ENCODE measurements at regions of chr14 and their contacts with region 1.

Region 1: DNA sequence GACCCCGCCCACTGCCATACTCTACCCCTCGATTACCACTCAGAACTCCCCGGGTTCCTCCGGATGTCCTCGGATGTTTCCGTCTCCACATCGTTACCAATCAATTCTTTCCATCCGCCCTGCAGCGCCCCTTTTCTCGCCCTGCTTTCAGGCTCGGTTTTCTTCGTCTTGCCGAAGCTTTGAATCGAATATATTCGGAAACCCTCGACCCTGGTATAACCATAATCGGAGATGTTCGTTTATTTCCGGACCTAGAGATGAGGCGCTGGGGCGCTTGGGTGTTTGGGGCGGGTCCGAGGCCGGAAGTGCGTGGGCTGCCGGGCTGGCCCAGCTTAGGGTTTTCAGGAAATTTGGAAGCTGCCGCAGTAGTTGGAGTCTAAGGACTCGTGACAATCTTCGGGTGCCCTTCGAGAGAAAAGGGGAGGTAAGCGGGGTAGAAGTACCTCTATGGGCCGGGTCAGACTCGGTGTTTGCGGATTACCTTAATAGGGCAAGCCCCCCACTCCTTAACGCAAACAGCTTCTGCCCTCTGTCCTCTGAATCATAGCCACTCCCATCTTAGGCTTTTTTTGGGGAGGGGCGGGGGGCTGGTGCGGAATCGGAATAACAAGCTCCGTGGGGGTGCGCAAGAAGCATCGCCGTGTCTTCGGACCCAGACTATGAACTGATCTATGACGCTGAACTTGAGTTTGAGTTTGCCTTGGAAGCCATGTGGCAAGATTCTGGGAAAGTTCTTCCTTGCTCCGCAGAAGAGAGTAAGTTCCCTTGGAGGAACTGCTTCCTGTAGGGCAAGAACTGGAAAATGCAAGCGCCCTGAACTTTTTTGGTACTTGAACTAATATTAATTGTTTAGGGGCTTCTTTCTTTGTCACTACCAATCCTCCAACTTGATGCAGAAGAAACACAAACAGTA is at the start of gene C14orf119:
- DNase-seq: peak; percentile 100
- ATAC-seq: peak; percentile 92
- H3K4me3 ChIP-seq: peak within 1 kb of the TSS; percentile 71 to 96 (median 95)
- H3K27ac ChIP-seq: peak within 1 kb of the TSS; percentile 89
- H3K4me1 ChIP-seq: peaks cover 37% of the 10 kb centered on the region
- H3K27me3 ChIP-seq: no peaks in the 10 kb centered on the region; a peak in 1 of 5 replicates
- CTCF ChIP-seq: peak; percentile 16; the same call in 1 of the 2 replicates
- EP300 ChIP-seq: no peak; a peak in 2 of 4 replicates
- POLR2A ChIP-seq: peak in 1 of 2 experiments; percentile 55; a peak in 2 of 4 replicates
- RAD21 ChIP-seq: peak; percentile 42; the same call in 1 of the 2 replicates
- total RNA-seq, gene C14orf119: 206 and 299 TPM in 2 replicates

Region 2: GRCh38 chr14:22872033-22872832 is 223.2 kb before region 1 on chr14:
- CTCF ChIA-PET with region 1: no interaction called
- POLR2A ChIA-PET with region 1: interaction called, 19 read pairs
- in situ Hi-C with region 1: no loop called
- intact Hi-C with region 1: no loop called
- DNase-seq: peak; percentile 84
- ATAC-seq: peak; percentile 62
- H3K4me3 ChIP-seq: peak overlapping the region; percentile 66 to 93 (median 82)
- H3K27ac ChIP-seq: peak overlapping the region; percentile 85
- H3K4me1 ChIP-seq: peaks cover 35% of the 10 kb centered on the region
- H3K27me3 ChIP-seq: no peaks in the 10 kb centered on the region; a peak in 1 of 5 replicates
- CTCF ChIP-seq: peak; percentile 99
- EP300 ChIP-seq: peak in 1 of 2 experiments; percentile 54; a peak in 2 of 4 replicates
- POLR2A ChIP-seq: no peak
- RAD21 ChIP-seq: peak; percentile 68

Region 3: DNA sequence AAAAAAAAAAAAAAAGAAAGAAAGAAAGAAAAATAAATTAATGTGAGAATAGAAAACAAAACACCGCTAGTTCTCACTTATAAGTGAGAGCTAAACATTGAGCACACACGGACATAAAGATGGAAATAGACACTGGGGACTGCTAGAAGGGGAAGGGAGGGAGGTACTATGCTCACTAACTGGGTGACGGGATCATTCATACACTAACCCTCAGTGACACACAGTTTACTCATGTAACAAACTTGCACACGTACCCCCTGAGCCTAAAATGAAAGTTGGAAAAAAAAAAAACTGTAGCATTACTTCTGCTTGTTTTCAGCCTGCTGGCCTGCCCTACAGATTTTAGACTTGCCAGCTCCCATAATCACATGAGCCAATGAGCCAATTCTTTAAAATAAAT is 155.8 kb before region 1 on chr14:
- CTCF ChIA-PET with region 1: no interaction called
- POLR2A ChIA-PET with region 1: no interaction called
- in situ Hi-C with region 1: no loop called
- intact Hi-C with region 1: no loop called
- DNase-seq: no peak
- ATAC-seq: no peak
- H3K4me3 ChIP-seq: no peak overlapping the region
- H3K27ac ChIP-seq: no peak overlapping the region
- H3K4me1 ChIP-seq: no peaks in the 10 kb centered on the region
- H3K27me3 ChIP-seq: no peaks in the 10 kb centered on the region
- CTCF ChIP-seq: no peak
- EP300 ChIP-seq: no peak
- POLR2A ChIP-seq: no peak
- RAD21 ChIP-seq: no peak

Region 4: GRCh38 chr14:22973217-22974032 is 122.0 kb before region 1 on chr14:
- CTCF ChIA-PET with region 1: no interaction called
- POLR2A ChIA-PET with region 1: interaction called, 55 read pairs
- in situ Hi-C with region 1: no loop called
- intact Hi-C with region 1: no loop called
- DNase-seq: peak; percentile 82
- ATAC-seq: no peak
- H3K4me3 ChIP-seq: no peak overlapping the region
- H3K27ac ChIP-seq: peak overlapping the region; percentile 97
- H3K4me1 ChIP-seq: peaks cover 65% of the 10 kb centered on the region
- H3K27me3 ChIP-seq: no peaks in the 10 kb centered on the region
- CTCF ChIP-seq: no peak
- EP300 ChIP-seq: no peak
- POLR2A ChIP-seq: peak in 1 of 2 experiments; percentile 73; a peak in 2 of 4 replicates
- RAD21 ChIP-seq: peak; percentile 97

Region 5: GRCh38 chr14:23034483-23035302 is 60.8 kb before region 1 on chr14 and contains the start of gene PSMB5:
- CTCF ChIA-PET with region 1: no interaction called
- POLR2A ChIA-PET with region 1: interaction called, 18 read pairs
- in situ Hi-C with region 1: no loop called
- intact Hi-C with region 1: loop called (anchors 2 kb)
- DNase-seq: peak; percentile 100
- ATAC-seq: peak; percentile 96
- H3K4me3 ChIP-seq: peak within 1 kb of the TSS; percentile 78 to 86 (median 80)
- H3K27ac ChIP-seq: peak within 1 kb of the TSS; percentile 90
- H3K4me1 ChIP-seq: peaks cover 38% of the 10 kb centered on the region
- H3K27me3 ChIP-seq: no peaks in the 10 kb centered on the region; a peak in 1 of 5 replicates
- CTCF ChIP-seq: peak; percentile 14
- EP300 ChIP-seq: peak; percentile 3 to 52; a peak in 2 of 4 replicates
- POLR2A ChIP-seq: peak in 1 of 2 experiments; percentile 98; a peak in 2 of 4 replicates
- RAD21 ChIP-seq: peak; percentile 49; the same call in 1 of the 2 replicates
- total RNA-seq, gene PSMB5: 871 and 1,316 TPM in 2 replicates

Region 6: DNA sequence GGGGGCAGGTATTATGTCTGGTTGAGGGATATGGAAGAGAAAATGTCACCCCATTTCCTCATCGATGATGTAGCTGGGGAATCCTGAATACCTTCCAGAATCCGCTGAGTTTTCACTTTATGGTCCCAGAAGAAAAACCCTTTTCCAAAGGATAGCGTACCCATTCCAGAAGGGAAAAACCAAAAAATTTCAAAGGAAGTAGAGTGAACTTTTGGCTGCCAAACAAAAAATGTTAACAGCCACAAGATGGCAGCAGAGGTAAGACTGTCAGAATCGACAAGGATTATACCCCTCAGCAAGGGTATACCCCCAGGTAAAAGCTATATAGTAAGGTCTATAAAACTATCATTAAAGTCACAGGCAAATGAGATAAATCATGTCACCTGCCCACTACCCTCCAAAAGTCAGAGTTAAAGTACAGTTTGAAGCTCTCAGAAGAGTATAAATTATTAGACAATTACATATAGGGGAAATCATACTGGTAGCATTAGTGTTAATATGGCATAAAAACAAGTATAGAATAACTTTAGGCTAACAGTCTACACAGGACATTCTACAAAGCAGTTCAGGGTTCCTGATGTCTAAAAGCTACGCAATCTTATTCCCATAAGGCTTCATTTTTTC is 18.6 kb before region 1 on chr14:
- CTCF ChIA-PET with region 1: interaction called, 7 read pairs
- POLR2A ChIA-PET with region 1: interaction called, 146 read pairs
- in situ Hi-C with region 1: no loop called
- intact Hi-C with region 1: no loop called
- DNase-seq: peak; percentile 68
- ATAC-seq: peak; percentile 57
- H3K4me3 ChIP-seq: no peak overlapping the region
- H3K27ac ChIP-seq: no peak overlapping the region
- H3K4me1 ChIP-seq: peaks cover 9% of the 10 kb centered on the region
- H3K27me3 ChIP-seq: no peaks in the 10 kb centered on the region
- CTCF ChIP-seq: peak; percentile 70
- EP300 ChIP-seq: no peak
- POLR2A ChIP-seq: no peak
- RAD21 ChIP-seq: no peak

Region 7: DNA sequence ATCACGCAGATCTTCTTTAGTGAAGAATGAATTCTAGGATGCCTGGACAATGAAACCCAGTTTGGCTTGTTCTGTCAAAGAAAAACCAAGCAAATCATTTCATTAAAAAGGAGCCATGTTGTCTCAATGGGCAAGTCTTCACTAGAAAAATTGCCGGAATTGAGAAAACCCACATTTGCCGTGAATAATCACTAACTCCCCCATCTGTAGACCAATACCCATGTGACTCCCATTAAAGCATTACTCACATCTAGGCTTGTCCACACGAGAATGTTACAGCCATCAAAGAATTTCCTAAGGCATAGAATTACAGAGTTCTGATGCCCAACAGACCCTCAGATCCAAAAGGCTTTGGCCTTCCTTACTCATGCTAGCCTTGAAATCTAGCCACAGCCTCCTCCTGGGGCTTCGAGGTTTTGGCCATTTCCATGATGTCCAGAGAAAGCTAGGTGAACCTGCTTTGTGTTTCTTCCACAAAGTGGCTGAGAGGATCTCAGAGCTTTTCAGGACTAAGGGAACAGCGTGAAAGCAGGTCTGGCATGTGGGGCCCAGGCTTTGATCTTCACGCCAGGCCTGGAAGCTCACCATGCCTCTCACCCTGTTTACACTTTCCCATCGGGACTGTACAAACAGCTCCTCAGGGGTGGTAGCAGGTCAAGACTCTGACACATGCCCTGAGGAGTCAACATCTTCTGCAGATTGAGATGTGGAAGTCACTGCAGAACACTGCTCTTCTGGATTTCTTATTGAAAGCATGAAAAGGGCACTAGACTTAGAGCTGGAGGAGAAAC is 76.0 kb after region 1 on chr14:
- CTCF ChIA-PET with region 1: no interaction called
- POLR2A ChIA-PET with region 1: no interaction called
- in situ Hi-C with region 1: no loop called
- intact Hi-C with region 1: no loop called
- DNase-seq: no peak
- ATAC-seq: peak; percentile 63
- H3K4me3 ChIP-seq: no peak overlapping the region
- H3K27ac ChIP-seq: no peak overlapping the region
- H3K4me1 ChIP-seq: peaks cover 15% of the 10 kb centered on the region
- H3K27me3 ChIP-seq: peaks cover 5 to 38% of the 10 kb centered on the region in 2 experiments; a peak in 3 of 5 replicates
- CTCF ChIP-seq: no peak
- EP300 ChIP-seq: no peak
- POLR2A ChIP-seq: no peak
- RAD21 ChIP-seq: no peak

Region 8: DNA sequence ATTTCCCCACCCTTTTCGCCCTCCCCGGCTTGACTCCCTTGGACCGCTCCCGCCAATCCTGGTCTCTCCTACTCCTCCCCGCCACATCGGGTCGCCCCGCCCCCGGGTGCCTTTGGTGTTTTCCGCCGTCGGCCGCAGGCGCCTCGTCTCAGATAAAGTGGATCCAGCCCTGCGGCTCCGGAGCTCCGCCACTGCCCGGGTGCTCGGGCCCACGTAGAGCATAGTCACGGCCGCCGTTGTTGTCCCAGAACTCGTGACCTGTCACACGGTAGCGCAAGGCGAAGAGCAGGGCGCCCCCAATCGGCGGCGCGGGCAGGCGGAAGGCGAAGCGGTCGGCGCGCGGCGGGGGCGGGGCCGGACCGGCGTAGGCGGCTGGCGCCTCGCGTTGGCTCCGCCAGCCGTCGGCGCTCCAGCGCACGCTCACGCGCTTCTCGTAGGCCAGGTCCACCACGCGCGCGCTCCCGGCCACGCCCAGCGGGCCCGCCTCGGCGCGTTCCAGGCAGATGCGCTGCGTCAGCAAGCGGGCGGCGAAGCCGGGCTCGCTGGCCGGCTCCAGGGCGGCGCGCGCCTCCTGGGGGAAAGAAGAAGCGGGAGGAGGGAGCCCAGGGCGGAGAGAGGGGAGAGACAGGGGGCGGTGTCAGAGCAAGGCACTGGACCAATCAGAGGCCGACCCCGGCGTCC is 206.0 kb after region 1 on chr14:
- CTCF ChIA-PET with region 1: no interaction called
- POLR2A ChIA-PET with region 1: interaction called, 47 read pairs
- in situ Hi-C with region 1: no loop called
- intact Hi-C with region 1: no loop called
- DNase-seq: peak; percentile 100
- ATAC-seq: peak; percentile 87
- H3K4me3 ChIP-seq: peak overlapping the region; percentile 67 to 88 (median 75)
- H3K27ac ChIP-seq: peak overlapping the region; percentile 91
- H3K4me1 ChIP-seq: peaks cover 57% of the 10 kb centered on the region
- H3K27me3 ChIP-seq: no peaks in the 10 kb centered on the region; a peak in 1 of 5 replicates
- CTCF ChIP-seq: peak; percentile 92
- EP300 ChIP-seq: peak in 1 of 2 experiments; percentile 54; a peak in 2 of 4 replicates
- POLR2A ChIP-seq: no peak
- RAD21 ChIP-seq: peak; percentile 87